ENCODE measurements at regions of chr5 and their contacts with region 1.

Region 1: GRCh38 chr5:93583768-93584595 is 960 bp downstream of the NR2F1 start:
- DNase-seq: peak; percentile 66
- ATAC-seq: peak; percentile 54
- H3K4me3 ChIP-seq: peak overlapping the region in 2 of 5 experiments; percentile 23 to 54
- H3K4me3 Mint-ChIP-seq: peak overlapping the region; percentile 44
- H3K27ac ChIP-seq: no peak overlapping the region
- H3K27ac Mint-ChIP-seq: no peak overlapping the region
- H3K4me1 ChIP-seq: peaks cover 48 to 66% of the 10 kb centered on the region in 2 donors
- H3K4me1 Mint-ChIP-seq: peaks cover 28% of the 10 kb centered on the region
- H3K27me3 ChIP-seq: peaks cover 0 to 81% (median 68%) of the 10 kb centered on the region in 4 experiments
- H3K27me3 Mint-ChIP-seq: peaks cover 41% of the 10 kb centered on the region
- CTCF ChIP-seq: no peak

Region 2: DNA sequence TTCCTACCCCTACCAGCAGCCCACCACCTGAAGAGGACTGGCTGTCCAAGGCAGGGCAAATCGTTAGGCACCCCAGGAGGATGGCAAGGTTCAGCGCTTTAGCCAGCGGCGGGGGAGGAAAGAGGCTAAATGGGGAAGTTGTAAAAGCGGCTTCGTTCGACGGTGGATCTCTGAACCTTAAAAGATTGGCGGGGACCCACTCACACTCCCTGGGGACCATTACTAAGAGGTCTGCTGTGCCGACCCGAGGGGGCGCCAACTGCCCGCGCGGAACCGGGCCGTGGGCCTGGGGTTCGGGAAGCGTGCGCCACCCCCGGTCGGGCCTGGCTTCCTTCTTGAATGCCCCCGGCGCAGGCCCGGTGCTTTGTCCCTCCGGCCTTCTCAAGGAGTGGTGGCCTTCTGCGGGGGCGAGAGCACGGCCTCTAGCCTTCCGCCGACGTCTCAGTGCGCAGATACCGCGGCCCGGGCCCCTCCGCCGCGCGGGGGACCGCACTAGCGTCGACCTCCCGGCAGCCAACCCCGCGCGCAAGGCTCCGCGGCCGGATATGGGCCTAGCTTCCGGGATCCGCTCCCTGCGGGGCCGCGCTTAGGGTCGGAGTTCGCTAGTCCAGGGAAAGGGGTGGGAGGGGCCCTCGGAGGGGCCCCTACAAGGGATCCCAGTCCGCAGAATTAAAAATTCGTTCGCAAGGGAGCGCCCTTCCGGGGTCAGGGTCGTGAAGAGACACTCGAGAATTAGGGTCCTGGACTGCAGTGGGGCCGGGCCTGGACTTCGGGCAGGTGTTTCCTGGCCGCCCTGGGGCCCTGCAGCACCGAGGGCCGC is 13.5 kb before region 1 on chr5:
- CTCF ChIA-PET with region 1: interaction called, 3 read pairs
- POLR2A ChIA-PET with region 1: interaction called, 4 read pairs
- intact Hi-C with region 1: loop called (anchors 2 kb)
- DNase-seq: peak; percentile 58
- ATAC-seq: peak; percentile 41
- H3K4me3 ChIP-seq: peak overlapping the region in 3 of 5 experiments; percentile 15 to 32 (median 30)
- H3K4me3 Mint-ChIP-seq: peak overlapping the region; percentile 65
- H3K27ac ChIP-seq: no peak overlapping the region
- H3K27ac Mint-ChIP-seq: no peak overlapping the region
- H3K4me1 ChIP-seq: peaks cover 27 to 35% of the 10 kb centered on the region in 2 donors
- H3K4me1 Mint-ChIP-seq: peaks cover 19% of the 10 kb centered on the region
- H3K27me3 ChIP-seq: peaks cover 2 to 73% (median 70%) of the 10 kb centered on the region in 4 experiments
- H3K27me3 Mint-ChIP-seq: peaks cover 66% of the 10 kb centered on the region
- CTCF ChIP-seq: no peak

Region 3: GRCh38 chr5:93594591-93595419 is 10.8 kb after region 1 on chr5:
- CTCF ChIA-PET with region 1: interaction called, 4 read pairs
- POLR2A ChIA-PET with region 1: no interaction called
- intact Hi-C with region 1: loop called (anchors 1 kb)
- DNase-seq: no peak
- ATAC-seq: no peak
- H3K4me3 ChIP-seq: no peak overlapping the region
- H3K4me3 Mint-ChIP-seq: no peak overlapping the region
- H3K27ac ChIP-seq: no peak overlapping the region
- H3K27ac Mint-ChIP-seq: no peak overlapping the region
- H3K4me1 ChIP-seq: peaks cover 13 to 41% of the 10 kb centered on the region in 2 donors
- H3K4me1 Mint-ChIP-seq: peaks cover 5% of the 10 kb centered on the region
- H3K27me3 ChIP-seq: peaks cover 0 to 97% (median 77%) of the 10 kb centered on the region in 4 experiments
- H3K27me3 Mint-ChIP-seq: peaks cover 68% of the 10 kb centered on the region
- CTCF ChIP-seq: no peak

Region 4: DNA sequence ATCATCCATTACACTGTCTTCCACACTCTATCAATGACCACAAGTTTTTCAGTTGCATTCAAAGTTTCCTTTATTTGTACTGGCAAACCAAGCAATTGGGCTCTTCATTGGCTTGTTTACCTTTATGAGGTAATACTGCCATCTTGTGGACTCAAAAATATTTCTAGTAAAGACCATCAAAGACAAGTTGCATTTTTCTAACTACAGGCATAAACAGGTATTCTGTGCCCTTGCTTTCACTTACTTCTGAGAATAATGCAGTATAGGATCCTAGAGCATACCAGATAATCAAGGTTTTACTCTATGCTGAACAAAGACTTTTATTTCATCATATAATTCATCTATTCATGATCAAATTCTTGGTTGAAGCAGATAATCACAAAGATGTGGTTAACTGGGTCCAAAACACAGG is 331.2 kb after region 1 on chr5:
- CTCF ChIA-PET with region 1: no interaction called
- POLR2A ChIA-PET with region 1: no interaction called
- intact Hi-C with region 1: loop called (anchors 1 kb)
- DNase-seq: peak; percentile 51
- ATAC-seq: peak; percentile 14
- H3K4me3 ChIP-seq: no peak overlapping the region
- H3K4me3 Mint-ChIP-seq: no peak overlapping the region
- H3K27ac ChIP-seq: no peak overlapping the region
- H3K27ac Mint-ChIP-seq: no peak overlapping the region
- H3K4me1 ChIP-seq: no peaks in the 10 kb centered on the region
- H3K4me1 Mint-ChIP-seq: no peaks in the 10 kb centered on the region
- H3K27me3 ChIP-seq: no peaks in the 10 kb centered on the region
- H3K27me3 Mint-ChIP-seq: no peaks in the 10 kb centered on the region
- CTCF ChIP-seq: peak; percentile 84